PC-9 (cell line): ENCODE measurements at regions of chr11 and their contacts with region 1.

Region 1: DNA sequence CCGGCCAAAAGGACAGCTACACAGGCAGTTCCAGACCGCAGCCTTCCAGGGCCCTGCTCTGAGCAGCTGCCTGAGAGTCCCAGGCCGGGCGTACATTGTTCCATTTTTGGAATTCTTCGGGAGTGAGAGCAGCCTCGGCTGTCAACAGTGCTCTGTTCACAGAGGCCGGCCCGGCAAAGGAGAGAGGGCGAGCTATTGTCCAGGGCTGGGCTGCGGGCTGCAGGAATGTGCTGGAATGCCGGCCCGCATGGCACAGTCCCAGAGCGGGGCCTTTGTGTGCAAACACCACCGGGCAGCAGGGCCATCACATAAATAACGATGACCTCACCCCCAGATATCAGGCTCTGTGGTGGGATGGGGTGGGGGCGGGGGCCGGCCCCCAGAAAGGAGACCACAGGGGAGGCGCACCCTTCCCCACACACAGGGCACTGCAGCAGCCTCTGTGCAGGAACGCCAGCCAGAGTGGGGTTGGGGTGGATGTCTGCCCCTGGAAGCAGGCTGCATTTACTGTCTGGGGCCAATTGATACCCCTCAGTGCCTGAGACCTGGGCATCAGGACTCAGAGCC is 15.8 kb downstream of the LINC01488 start:
- DNase-seq: peak; percentile 81 to 93
- H3K4me3 ChIP-seq: no peak overlapping the region
- H3K27ac ChIP-seq: no peak overlapping the region
- H3K4me1 ChIP-seq: peaks cover 14% of the 10 kb centered on the region
- H3K27me3 ChIP-seq: peaks cover 18% of the 10 kb centered on the region
- CTCF ChIP-seq: no peak

Region 2: GRCh38 chr11:69376861-69377595 is 120.3 kb before region 1 on chr11:
- CTCF ChIA-PET with region 1: no interaction called
- POLR2A ChIA-PET with region 1: no interaction called
- intact Hi-C with region 1: loop called (anchors 5 kb)
- DNase-seq: peak in 1 of 2 experiments; percentile 51
- H3K4me3 ChIP-seq: no peak overlapping the region
- H3K27ac ChIP-seq: peak overlapping the region; percentile 31
- H3K4me1 ChIP-seq: peaks cover 22% of the 10 kb centered on the region
- H3K27me3 ChIP-seq: no peaks in the 10 kb centered on the region
- CTCF ChIP-seq: no peak

Region 3: GRCh38 chr11:69524282-69524911 is 27.1 kb after region 1 on chr11:
- CTCF ChIA-PET with region 1: no interaction called
- POLR2A ChIA-PET with region 1: no interaction called
- intact Hi-C with region 1: loop called (anchors 1 kb)
- DNase-seq: peak in 1 of 2 experiments; percentile 89
- H3K4me3 ChIP-seq: no peak overlapping the region
- H3K27ac ChIP-seq: no peak overlapping the region
- H3K4me1 ChIP-seq: no peaks in the 10 kb centered on the region
- H3K27me3 ChIP-seq: peaks cover 5% of the 10 kb centered on the region; the same call in 1 of the 2 replicates
- CTCF ChIP-seq: no peak

Region 4: GRCh38 chr11:69670158-69670845 is 173.0 kb after region 1 on chr11:
- CTCF ChIA-PET with region 1: no interaction called
- POLR2A ChIA-PET with region 1: no interaction called
- intact Hi-C with region 1: no loop called
- DNase-seq: peak; percentile 65 to 83
- H3K4me3 ChIP-seq: no peak overlapping the region
- H3K27ac ChIP-seq: no peak overlapping the region
- H3K4me1 ChIP-seq: peaks cover 14% of the 10 kb centered on the region
- H3K27me3 ChIP-seq: no peaks in the 10 kb centered on the region
- CTCF ChIP-seq: peak; percentile 97